Activated CD4-positive, alpha-beta T cell treated with anti-CD3 and anti-CD28 coated beads for 36 hours (primary cell): ENCODE measurements at regions of chr4 and their contacts with region 1.

Region 1: DNA sequence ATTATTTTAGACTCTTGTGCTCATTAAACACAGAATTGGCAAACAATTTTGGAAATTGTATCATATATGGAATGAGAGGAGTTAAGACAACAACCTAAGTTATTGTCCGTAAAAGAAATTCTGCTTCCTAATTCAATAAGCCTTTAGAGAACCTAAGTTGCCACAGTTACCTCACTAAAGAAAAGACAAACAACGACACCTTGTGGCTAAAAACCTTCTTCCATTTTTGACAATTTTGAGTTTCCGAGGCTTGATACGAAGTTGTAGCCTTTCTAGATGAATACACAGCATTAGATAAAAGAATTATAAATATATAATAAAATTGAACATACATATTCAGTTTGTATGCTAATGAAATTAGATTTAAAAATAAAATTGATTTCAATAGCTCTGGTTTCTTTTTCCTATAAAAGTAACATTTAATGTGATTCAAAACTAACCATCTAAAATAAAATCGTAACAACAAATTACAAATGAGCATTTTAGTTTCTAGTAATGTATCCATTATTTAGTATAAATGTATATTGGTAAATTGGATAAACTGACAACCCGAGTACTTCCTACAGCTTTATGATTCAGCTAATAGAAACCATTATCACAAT is 275.1 kb downstream of the GPM6A start:
- DNase-seq: no peak
- ATAC-seq: no peak
- H3K4me3 Mint-ChIP-seq: no peak overlapping the region
- H3K27ac Mint-ChIP-seq: no peak overlapping the region
- H3K4me1 Mint-ChIP-seq: no peaks in the 10 kb centered on the region
- H3K27me3 Mint-ChIP-seq: no peaks in the 10 kb centered on the region

Region 2: DNA sequence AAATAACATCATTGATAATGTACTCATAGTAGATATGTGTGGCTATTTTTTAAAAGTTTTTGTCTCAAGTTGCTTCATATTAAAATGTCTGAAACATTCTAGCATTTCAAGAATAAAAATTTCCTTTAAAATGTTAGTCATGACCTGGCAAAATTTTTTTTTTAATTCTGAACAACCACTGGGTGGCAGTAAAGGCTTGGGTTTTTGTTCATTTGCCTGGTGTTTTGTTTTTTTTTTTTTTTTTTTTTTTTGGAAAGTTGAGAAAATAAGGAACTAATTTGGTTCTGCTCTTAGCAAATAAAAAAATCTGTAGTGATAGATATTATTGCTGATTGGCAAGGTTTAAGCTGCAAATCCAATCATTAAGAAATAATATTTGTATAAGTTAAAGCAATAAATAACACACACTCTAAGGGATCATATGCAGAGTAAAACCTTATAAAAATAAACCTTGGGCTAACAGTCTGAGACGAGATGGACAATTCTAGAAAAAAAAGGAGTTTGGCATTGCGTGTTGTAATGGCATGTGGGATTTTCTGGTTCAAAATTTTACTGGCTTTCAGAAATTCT is 1171.8 kb before region 1 on chr4:
- CTCF ChIA-PET with region 1: no interaction called
- POLR2A ChIA-PET with region 1: no interaction called
- intact Hi-C with region 1: loop called in 1 of 2 experiments (anchors 2 kb)
- DNase-seq: peak; percentile 11
- ATAC-seq: no peak
- H3K4me3 Mint-ChIP-seq: no peak overlapping the region
- H3K27ac Mint-ChIP-seq: no peak overlapping the region
- H3K4me1 Mint-ChIP-seq: no peaks in the 10 kb centered on the region
- H3K27me3 Mint-ChIP-seq: peaks cover 9% of the 10 kb centered on the region

Region 3: DNA sequence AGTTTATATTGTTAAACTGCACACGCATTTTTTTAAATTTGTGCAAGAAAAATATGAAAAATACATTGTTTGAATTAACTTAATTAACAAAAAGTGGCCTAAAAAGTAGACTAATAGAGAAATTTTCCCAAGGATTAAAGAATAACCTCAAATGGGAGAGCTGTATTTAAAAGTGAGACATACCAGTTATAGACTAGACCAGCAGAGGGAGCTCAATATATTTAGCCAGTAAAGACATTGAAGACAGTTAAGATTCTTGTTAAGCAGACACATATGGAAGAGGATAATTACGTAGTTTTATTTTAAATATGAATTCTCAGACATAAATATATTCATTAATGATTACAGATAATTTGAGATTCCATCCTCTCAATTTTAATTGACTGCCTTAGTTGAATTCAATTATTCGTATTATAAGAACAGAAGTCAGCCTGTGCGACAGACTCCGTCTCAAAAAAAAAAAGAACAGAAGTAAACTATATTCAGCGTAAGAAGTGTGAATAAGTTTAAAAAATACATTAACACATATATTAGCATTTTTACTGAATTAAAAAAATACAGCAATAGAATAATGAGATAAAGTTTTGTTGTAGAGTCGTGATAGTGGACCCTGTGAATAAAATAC is 772.7 kb before region 1 on chr4:
- CTCF ChIA-PET with region 1: no interaction called
- POLR2A ChIA-PET with region 1: no interaction called
- intact Hi-C with region 1: loop called (anchors 1 to 5 kb)
- DNase-seq: no peak
- ATAC-seq: no peak
- H3K4me3 Mint-ChIP-seq: no peak overlapping the region
- H3K27ac Mint-ChIP-seq: no peak overlapping the region
- H3K4me1 Mint-ChIP-seq: no peaks in the 10 kb centered on the region
- H3K27me3 Mint-ChIP-seq: no peaks in the 10 kb centered on the region

Region 4: GRCh38 chr4:174873931-174874330 is 663.0 kb before region 1 on chr4:
- CTCF ChIA-PET with region 1: no interaction called
- POLR2A ChIA-PET with region 1: no interaction called
- intact Hi-C with region 1: loop called in 1 of 2 experiments (anchors 2 kb)
- DNase-seq: no peak
- ATAC-seq: no peak
- H3K4me3 Mint-ChIP-seq: no peak overlapping the region
- H3K27ac Mint-ChIP-seq: no peak overlapping the region
- H3K4me1 Mint-ChIP-seq: no peaks in the 10 kb centered on the region
- H3K27me3 Mint-ChIP-seq: no peaks in the 10 kb centered on the region